AG04449 (cell line): ENCODE measurements at regions of chr3 and their contacts with region 1.

Region 1: DNA sequence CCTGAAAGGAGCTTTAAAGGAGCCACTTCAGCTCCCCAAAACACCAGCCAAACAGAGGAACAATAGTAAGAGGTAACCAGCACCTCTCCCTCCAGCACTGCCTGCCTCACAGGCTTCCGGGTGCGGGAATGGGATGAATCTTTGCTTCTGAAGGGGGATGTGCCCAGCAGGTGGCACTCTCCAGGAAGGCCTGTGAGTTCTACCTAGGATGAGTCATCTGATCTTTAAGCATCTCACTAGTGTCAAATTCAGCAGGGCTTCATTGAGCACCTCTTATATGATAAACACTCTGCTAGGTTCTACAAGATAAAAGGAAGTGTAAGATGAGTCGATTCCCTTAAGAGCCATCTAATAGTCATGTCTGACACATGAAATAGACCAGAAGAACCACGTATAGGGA is 237.4 kb upstream of the UMPS start:
- DNase-seq: no peak
- H3K4me3 ChIP-seq: no peak overlapping the region
- CTCF ChIP-seq: peak; percentile 23

Region 2: DNA sequence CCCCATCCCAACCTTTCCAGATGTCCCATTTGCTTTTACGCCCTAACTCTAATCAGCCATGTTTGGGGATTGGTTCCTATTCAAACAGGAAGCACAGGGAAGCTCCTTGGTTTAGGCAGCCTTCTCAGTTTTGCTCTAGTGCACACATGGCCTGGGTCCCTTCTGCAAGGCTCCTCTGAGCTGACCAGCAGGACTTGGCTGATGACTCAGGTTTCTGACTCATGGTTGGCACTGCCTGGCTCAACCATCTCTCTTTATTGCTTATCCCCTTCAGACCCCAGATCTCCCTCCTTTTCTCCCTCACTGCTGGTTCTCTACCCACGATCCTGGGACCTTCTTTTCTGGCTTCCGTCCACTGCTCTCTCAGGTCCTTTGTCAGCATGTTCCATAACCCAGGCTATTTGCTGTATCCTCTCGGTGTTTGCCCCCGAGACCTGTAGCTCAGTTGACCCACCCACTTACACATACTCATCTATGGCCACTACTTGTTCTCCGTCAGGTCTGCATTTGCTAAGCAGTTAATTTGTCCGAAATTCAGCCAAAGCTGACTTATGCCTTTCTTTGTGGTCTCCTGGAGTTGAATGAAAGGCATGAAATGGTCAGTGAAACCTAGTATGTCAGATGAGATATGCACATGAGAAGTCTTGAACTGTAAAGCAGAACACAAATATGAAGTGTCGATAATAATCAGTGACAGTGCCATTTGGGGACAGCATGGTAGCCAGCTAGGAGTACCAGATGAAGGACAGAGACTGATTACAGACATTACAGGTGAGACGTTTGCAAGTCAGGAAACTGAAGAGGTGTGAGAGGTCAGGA is 177.4 kb before region 1 on chr3:
- CTCF ChIA-PET with region 1: no interaction called
- POLR2A ChIA-PET with region 1: no interaction called
- DNase-seq: peak; percentile 9
- H3K4me3 ChIP-seq: no peak overlapping the region
- CTCF ChIP-seq: no peak

Region 3: GRCh38 chr3:124360563-124360962 is 132.2 kb before region 1 on chr3:
- CTCF ChIA-PET with region 1: no interaction called
- POLR2A ChIA-PET with region 1: no interaction called
- DNase-seq: no peak
- H3K4me3 ChIP-seq: no peak overlapping the region
- CTCF ChIP-seq: no peak

Region 4: DNA sequence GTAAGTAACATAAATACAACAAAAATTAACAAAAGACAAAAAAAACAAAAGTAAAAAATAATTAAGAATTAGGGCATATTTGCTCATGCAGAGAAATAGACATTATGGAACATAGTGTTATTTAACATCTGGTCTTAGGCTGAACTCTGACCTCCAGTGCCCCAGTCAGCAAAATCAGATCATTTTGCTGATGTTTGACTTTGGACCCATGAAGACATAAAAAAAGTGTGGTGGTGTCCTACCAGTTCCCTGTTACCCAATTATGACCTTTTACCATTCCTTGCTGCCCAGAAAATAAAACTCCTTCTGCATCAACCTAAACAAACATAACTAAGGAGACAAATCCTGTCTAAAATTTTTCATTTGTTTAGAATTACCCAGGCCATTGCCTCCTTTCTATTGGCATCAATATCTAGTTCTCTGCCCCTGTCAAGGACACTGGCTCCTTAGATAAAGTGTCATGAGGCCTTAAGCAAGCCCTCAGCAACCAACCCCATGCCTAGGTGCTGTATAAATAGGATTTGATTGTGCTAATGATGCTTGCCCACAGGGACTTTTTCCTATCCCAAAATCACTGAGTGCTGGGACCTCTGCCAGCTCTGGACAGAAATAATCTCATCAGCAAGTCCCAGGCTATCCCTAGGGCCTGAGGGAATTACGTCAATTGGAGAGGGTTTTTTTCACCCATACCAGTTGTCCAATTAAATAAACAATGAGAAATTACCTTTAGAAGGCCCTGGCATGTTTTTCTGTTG is 97.0 kb before region 1 on chr3:
- CTCF ChIA-PET with region 1: no interaction called
- POLR2A ChIA-PET with region 1: no interaction called
- DNase-seq: no peak
- H3K4me3 ChIP-seq: no peak overlapping the region
- CTCF ChIP-seq: no peak

Region 5: DNA sequence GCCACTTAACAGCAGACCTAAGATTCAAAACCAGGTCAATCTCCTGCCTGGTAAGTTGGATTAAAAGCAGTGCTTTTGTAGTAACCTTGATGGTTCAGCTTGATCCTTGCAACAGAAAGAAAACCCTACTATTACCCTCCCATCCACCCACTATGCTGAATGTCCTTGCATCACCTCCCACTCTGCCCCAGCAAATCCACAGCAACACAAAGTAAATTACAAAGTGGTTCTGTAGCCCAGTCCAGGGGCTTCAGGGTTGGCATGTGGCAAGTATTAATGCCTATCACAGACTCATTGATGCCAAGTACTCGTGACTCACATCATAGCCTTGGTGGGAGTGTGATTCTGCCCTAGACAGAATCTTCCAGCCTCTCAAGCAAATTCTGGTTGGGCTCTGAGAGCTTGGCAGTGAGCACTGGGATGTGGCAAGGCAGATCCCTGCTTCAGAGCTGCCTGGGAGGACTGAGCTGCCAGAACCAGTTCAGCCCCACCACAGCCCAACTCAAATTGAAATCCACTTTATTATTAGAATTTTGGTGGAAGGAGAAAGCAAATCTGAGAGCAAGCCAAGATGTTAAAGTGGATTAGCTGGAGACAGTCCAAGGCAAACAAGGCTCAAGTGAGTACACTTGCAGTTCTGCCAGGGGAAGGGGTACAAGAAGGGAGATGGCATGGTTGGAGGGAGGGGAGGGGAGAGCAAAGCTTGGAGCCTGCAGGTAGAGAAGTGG is 11.7 kb after region 1 on chr3:
- CTCF ChIA-PET with region 1: interaction called, 14 read pairs
- POLR2A ChIA-PET with region 1: no interaction called
- DNase-seq: peak; percentile 65
- H3K4me3 ChIP-seq: no peak overlapping the region
- CTCF ChIP-seq: no peak